Spleen (tissue), 13 donors: ENCODE measurements at regions of chr1 and their contacts with region 1.

Region 1: GRCh38 chr1:23691499-23692307 is at the start of gene RPL11:
- DNase-seq: peak; percentile 96
- H3K4me3 ChIP-seq: peak within 1 kb of the TSS; percentile 60 to 87 (median 78)
- H3K27ac ChIP-seq: peak within 1 kb of the TSS; percentile 84 to 93 (median 86)
- H3K4me1 ChIP-seq: peaks cover 20 to 54% (median 51%) of the 10 kb centered on the region in 6 donors
- H3K27me3 ChIP-seq: no peaks in the 10 kb centered on the region
- CTCF ChIP-seq: peak; percentile 81 to 93 (median 88)
- POLR2A ChIP-seq: peak; percentile 36 to 74 (median 36)
- total RNA-seq, gene RPL11: 864 to 1,229 (median 1,082) TPM

Region 2: GRCh38 chr1:23743287-23744052 is 51.8 kb after region 1 on chr1 and contains the start of gene ELOA:
- intact Hi-C with region 1: loop called (anchors 10 kb)
- DNase-seq: peak; percentile 97
- H3K4me3 ChIP-seq: peak within 1 kb of the TSS; percentile 90 to 100 (median 98)
- H3K27ac ChIP-seq: peak within 1 kb of the TSS; percentile 89 to 98 (median 96)
- H3K4me1 ChIP-seq: peaks cover 19 to 57% (median 53%) of the 10 kb centered on the region in 6 donors
- H3K27me3 ChIP-seq: no peaks in the 10 kb centered on the region
- CTCF ChIP-seq: no peak
- POLR2A ChIP-seq: peak in 2 of 3 donors; percentile 43 to 52
- total RNA-seq, gene ELOA: 30.3 to 38.0 (median 34.0) TPM